Activated CD8-positive, alpha-beta T cell treated with anti-CD3 and anti-CD28 coated beads for 36 hours (primary cell): ENCODE measurements at regions of chr1 and their contacts with region 1.

Region 1: GRCh38 chr1:198556971-198557370 is 16.5 kb upstream of the ATP6V1G3 start:
- DNase-seq: peak; percentile 82
- ATAC-seq: peak; percentile 94
- H3K4me3 Mint-ChIP-seq: peak overlapping the region; percentile 72
- H3K27ac Mint-ChIP-seq: peak overlapping the region; percentile 85
- H3K4me1 Mint-ChIP-seq: peaks cover 84% of the 10 kb centered on the region
- H3K27me3 Mint-ChIP-seq: no peaks in the 10 kb centered on the region
- CTCF ChIP-seq: no peak

Region 2: GRCh38 chr1:198520524-198521254 is 36.3 kb before region 1 on chr1:
- CTCF ChIA-PET with region 1: interaction called, 7 read pairs
- POLR2A ChIA-PET with region 1: no interaction called
- intact Hi-C with region 1: loop called (anchors 5 kb)
- DNase-seq: peak; percentile 37
- ATAC-seq: peak; percentile 60
- H3K4me3 Mint-ChIP-seq: peak overlapping the region; percentile 72
- H3K27ac Mint-ChIP-seq: peak overlapping the region; percentile 92
- H3K4me1 Mint-ChIP-seq: peaks cover 68% of the 10 kb centered on the region
- H3K27me3 Mint-ChIP-seq: no peaks in the 10 kb centered on the region
- CTCF ChIP-seq: no peak

Region 3: GRCh38 chr1:198598796-198599321 is 41.9 kb after region 1 on chr1:
- CTCF ChIA-PET with region 1: no interaction called
- POLR2A ChIA-PET with region 1: interaction called, 3 read pairs
- intact Hi-C with region 1: loop called (anchors 5 kb)
- DNase-seq: peak; percentile 58
- ATAC-seq: peak; percentile 64
- H3K4me3 Mint-ChIP-seq: peak overlapping the region; percentile 14
- H3K27ac Mint-ChIP-seq: peak overlapping the region; percentile 90
- H3K4me1 Mint-ChIP-seq: peaks cover 82% of the 10 kb centered on the region
- H3K27me3 Mint-ChIP-seq: no peaks in the 10 kb centered on the region
- CTCF ChIP-seq: no peak

Region 4: DNA sequence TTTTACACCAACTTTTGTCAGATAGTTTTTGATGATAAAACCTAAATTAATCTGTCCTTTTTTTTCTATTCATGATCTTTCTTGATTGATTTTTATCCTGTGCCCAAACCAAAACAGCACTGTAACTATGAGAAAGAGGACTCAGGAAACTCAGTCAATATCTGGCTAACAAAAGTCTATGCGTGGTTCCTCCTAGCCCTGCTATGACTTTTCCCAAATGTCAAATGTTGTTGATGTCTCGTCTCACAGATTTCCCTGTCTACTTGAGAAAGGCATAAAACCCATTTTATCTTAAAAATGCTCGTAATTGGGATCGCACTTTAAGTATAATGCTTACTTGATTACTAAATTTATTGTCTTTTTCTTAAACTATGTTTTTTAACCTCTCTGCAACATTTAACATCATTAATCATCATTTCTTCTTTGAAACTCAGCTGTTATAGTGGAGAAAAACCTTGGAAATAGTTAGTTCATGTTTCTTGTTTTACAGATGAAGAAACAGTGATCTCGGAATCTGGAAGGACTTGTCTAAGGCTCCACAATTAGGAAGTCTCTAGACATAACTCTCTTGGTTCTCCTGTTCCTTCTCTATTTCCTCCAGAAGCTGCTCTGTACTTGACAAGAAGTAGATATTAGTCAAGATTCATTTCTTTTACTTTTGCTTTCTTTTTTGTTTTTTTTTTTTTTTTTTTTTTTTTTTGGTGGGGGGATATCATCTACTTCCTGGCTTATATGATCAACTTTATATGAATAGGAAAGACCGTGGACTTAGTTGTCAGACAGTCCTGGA is 55.7 kb after region 1 on chr1:
- CTCF ChIA-PET with region 1: no interaction called
- POLR2A ChIA-PET with region 1: no interaction called
- intact Hi-C with region 1: loop called (anchors 5 kb)
- DNase-seq: no peak
- ATAC-seq: peak; percentile 41
- H3K4me3 Mint-ChIP-seq: peak overlapping the region; percentile 62
- H3K27ac Mint-ChIP-seq: peak overlapping the region; percentile 97
- H3K4me1 Mint-ChIP-seq: peaks cover 73% of the 10 kb centered on the region
- H3K27me3 Mint-ChIP-seq: no peaks in the 10 kb centered on the region
- CTCF ChIP-seq: no peak

Region 5: DNA sequence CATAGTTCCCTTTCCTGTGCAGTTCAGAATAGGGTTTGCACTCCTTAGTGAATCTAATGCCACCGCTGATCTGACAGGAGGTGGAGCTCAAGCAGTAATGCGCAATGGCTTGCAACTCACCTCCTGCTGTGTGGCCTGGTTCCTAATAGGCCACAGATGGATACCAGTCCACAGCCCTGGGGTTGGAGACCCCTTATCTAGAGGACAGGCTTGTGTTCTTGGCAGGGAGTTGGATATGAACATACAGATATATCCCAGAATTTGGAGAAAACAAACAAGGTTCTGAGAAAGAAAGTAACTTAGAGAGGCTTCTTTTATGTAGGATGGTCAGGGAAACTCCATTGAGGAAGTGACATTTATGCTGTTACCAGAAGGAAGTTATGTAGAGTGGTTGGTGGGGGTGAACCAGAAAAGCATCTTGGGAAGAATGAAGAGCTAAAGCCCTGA is 76.7 kb after region 1 on chr1:
- CTCF ChIA-PET with region 1: no interaction called
- POLR2A ChIA-PET with region 1: no interaction called
- intact Hi-C with region 1: no loop called
- DNase-seq: no peak
- ATAC-seq: peak; percentile 60
- H3K4me3 Mint-ChIP-seq: peak overlapping the region; percentile 41
- H3K27ac Mint-ChIP-seq: peak overlapping the region; percentile 84
- H3K4me1 Mint-ChIP-seq: peaks cover 79% of the 10 kb centered on the region
- H3K27me3 Mint-ChIP-seq: no peaks in the 10 kb centered on the region
- CTCF ChIP-seq: no peak

Region 6: GRCh38 chr1:198643808-198644207 is 86.8 kb after region 1 on chr1:
- CTCF ChIA-PET with region 1: no interaction called
- POLR2A ChIA-PET with region 1: no interaction called
- intact Hi-C with region 1: no loop called
- DNase-seq: no peak
- ATAC-seq: peak; percentile 25
- H3K4me3 Mint-ChIP-seq: peak overlapping the region; percentile 86
- H3K27ac Mint-ChIP-seq: peak overlapping the region; percentile 97
- H3K4me1 Mint-ChIP-seq: peaks cover 32% of the 10 kb centered on the region
- H3K27me3 Mint-ChIP-seq: no peaks in the 10 kb centered on the region
- CTCF ChIP-seq: no peak

Region 7: DNA sequence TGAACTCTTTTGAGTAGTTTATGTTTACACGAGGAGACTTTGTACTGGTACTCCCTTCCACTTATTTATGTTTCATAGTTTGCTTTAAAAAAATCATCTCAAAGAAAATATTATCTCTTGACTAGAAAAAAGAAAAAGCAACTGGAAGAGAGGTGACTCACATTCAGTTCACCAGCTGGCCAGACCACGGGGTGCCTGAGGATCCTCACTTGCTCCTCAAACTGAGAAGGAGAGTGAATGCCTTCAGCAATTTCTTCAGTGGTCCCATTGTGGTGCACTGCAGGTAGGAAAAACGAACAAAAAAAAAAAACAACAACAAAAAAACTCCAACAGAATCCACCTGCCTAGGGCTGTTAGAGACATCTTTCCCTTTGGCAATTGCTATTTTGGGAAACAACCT is 184.8 kb after region 1 on chr1:
- CTCF ChIA-PET with region 1: no interaction called
- POLR2A ChIA-PET with region 1: no interaction called
- intact Hi-C with region 1: no loop called
- DNase-seq: no peak
- ATAC-seq: no peak
- H3K4me3 Mint-ChIP-seq: no peak overlapping the region
- H3K27ac Mint-ChIP-seq: peak overlapping the region; percentile 86
- H3K4me1 Mint-ChIP-seq: peaks cover 52% of the 10 kb centered on the region
- H3K27me3 Mint-ChIP-seq: no peaks in the 10 kb centered on the region
- CTCF ChIP-seq: no peak